ENCODE measurements at regions of chr12 and their contacts with region 1.

Region 1: GRCh38 chr12:56630160-56630632 is at the start of gene BAZ2A:
- DNase-seq: peak; percentile 80 to 86 (median 83)
- H3K4me3 ChIP-seq: peak within 1 kb of the TSS; percentile 90 to 98
- H3K4me3 Mint-ChIP-seq: peak within 1 kb of the TSS; percentile 86 to 99 (median 92)
- H3K27ac ChIP-seq: peak within 1 kb of the TSS; percentile 93
- H3K27ac Mint-ChIP-seq: peak within 1 kb of the TSS; percentile 82 to 98 (median 94)
- H3K4me1 ChIP-seq: peaks cover 76% of the 10 kb centered on the region
- H3K4me1 Mint-ChIP-seq: peaks cover 43 to 81% (median 63%) of the 10 kb centered on the region in 4 donors
- H3K27me3 ChIP-seq: no peaks in the 10 kb centered on the region
- H3K27me3 Mint-ChIP-seq: no peaks in the 10 kb centered on the region
- total RNA-seq, gene BAZ2A: 206 to 212 TPM

Region 2: DNA sequence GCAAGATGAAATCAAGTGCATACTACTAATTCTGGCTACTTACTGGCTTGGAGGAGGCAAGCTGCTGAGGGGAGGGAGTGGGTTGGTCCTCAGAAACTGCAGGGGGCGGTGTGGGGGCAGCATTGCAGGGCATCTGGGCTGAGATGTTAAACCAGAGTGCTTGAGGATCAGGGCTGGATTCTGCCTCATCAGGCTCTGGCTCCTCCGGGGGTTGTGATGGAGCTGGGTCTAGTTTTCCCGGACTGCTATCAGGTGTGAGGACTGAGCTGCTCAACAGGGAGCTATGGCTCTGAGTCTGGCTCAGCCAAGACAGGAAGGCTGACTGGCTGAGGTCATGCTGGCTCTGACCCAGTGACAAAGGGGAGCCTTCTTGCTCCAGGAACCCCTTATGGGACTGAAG is 28.7 kb before region 1 on chr12:
- CTCF ChIA-PET with region 1: interaction called, 38 read pairs
- POLR2A ChIA-PET with region 1: interaction called, 8 read pairs
- intact Hi-C with region 1: no loop called
- DNase-seq: peak in 2 of 5 donors; percentile 16 to 24
- H3K4me3 ChIP-seq: no peak overlapping the region
- H3K4me3 Mint-ChIP-seq: no peak overlapping the region
- H3K27ac ChIP-seq: no peak overlapping the region
- H3K27ac Mint-ChIP-seq: peak overlapping the region in 1 of 7 donors; percentile 62
- H3K4me1 ChIP-seq: no peaks in the 10 kb centered on the region
- H3K4me1 Mint-ChIP-seq: no peaks in the 10 kb centered on the region
- H3K27me3 ChIP-seq: no peaks in the 10 kb centered on the region
- H3K27me3 Mint-ChIP-seq: no peaks in the 10 kb centered on the region

Region 3: DNA sequence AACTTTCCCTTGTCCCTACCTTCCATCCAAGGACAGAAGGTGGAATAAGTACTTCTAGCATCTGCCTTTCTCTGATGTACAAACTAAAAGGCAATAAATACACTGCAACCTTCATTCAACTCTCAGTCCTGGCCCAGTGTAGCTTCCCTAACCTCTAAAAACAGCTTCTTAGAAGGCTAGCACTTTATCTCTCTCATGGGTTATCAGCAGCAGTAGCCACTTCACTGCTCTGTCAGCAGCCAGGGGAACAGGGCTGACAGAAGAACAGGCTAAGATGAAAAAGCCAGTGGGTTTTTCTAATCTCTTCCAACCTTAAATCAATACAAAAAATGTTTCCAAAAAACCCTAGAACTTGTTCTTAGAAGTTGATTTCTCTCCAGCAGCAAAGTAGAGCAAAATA is 13.3 kb before region 1 on chr12:
- CTCF ChIA-PET with region 1: interaction called, 68 read pairs
- POLR2A ChIA-PET with region 1: interaction called, 67 read pairs
- intact Hi-C with region 1: no loop called
- DNase-seq: no peak
- H3K4me3 ChIP-seq: no peak overlapping the region
- H3K4me3 Mint-ChIP-seq: no peak overlapping the region
- H3K27ac ChIP-seq: no peak overlapping the region
- H3K27ac Mint-ChIP-seq: peak overlapping the region in 3 of 7 donors; percentile 23 to 66 (median 48)
- H3K4me1 ChIP-seq: peaks cover 21% of the 10 kb centered on the region
- H3K4me1 Mint-ChIP-seq: peaks cover 15 to 40% (median 24%) of the 10 kb centered on the region in 4 donors
- H3K27me3 ChIP-seq: no peaks in the 10 kb centered on the region
- H3K27me3 Mint-ChIP-seq: no peaks in the 10 kb centered on the region

Region 4: DNA sequence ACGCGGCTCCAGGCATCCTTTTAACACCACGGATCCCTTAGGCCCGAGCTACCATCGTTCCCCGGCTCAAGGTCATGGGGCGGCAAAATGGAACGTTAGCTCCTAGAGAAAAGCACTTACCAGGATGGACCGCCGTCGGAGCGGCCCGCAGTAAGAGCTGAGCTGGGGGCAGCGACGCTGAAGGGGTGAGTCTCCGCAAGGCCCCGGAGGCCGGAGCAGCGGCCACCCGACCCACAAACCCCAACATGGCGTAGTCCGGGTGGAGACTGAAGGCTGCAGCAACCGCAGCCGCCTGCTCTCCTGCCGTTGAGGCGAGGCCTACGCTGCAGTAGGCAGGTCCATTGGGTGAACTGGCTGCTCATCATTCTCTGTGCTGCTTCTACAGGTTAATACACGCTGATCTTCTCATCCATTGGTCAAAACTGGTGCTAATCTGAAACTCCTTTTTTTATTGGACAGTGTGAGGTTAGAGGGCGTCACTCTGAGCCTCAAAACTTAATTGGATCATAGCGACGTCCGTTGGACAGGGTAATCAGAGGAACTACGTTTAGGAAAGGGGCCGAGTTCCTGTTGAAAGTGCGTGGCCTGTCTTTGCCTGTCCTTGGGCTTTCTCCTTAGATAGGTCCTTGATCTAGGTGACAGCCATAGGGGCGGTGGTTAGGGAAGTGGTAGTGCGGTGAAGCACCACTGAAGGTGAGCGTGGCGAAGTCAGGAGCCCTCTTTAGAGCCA is 15.7 kb after region 1 on chr12 and contains the start of gene ATP5F1B:
- CTCF ChIA-PET with region 1: interaction called, 38 read pairs
- POLR2A ChIA-PET with region 1: interaction called, 117 read pairs
- intact Hi-C with region 1: loop called (anchors 1 kb)
- DNase-seq: peak; percentile 91 to 97 (median 96)
- H3K4me3 ChIP-seq: peak within 1 kb of the TSS; percentile 95 to 99
- H3K4me3 Mint-ChIP-seq: peak within 1 kb of the TSS; percentile 68 to 99 (median 97)
- H3K27ac ChIP-seq: peak within 1 kb of the TSS; percentile 91
- H3K27ac Mint-ChIP-seq: peak within 1 kb of the TSS; percentile 78 to 99 (median 98)
- H3K4me1 ChIP-seq: peaks cover 33% of the 10 kb centered on the region
- H3K4me1 Mint-ChIP-seq: peaks cover 18 to 43% (median 30%) of the 10 kb centered on the region in 4 donors
- H3K27me3 ChIP-seq: no peaks in the 10 kb centered on the region
- H3K27me3 Mint-ChIP-seq: no peaks in the 10 kb centered on the region
- total RNA-seq, gene ATP5F1B: 243 to 256 TPM

Region 5: DNA sequence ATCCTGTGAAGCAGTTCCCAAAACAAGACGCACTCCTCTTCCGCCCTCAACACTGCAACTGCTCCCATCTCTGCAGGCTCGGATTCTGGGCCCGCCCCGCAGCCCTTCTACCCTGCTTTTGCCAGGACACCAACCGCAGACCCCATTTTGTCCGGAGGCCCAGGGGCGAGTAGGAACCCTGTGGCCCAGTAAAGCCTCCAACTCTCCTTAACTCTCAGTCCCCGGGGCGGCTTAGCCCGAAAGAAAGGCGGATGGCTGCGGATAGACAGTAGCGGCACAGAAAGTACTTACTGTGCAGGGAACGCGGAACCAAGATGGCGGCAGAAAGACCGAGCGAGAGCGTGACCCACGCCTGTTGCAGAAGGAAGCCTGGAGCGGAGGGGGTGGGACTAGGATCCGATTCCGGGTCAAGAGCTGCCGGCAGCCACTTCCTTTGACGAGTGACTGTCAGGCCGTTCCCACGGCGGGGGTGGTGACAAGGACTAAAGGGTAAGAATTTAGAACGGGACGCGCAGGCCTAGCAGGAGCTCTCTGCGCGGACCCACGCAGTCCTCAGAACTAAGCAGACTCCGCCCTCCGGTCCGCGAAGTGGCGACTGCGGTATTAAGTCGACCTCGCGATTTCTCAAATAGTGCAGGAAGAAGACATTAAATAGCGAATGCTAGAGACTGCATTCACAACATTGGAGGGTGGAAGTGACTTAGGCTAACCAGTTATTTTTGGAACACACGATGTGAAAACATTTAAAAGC is 95.0 kb after region 1 on chr12 and contains the start of gene NACA:
- CTCF ChIA-PET with region 1: interaction called, 6 read pairs
- POLR2A ChIA-PET with region 1: interaction called, 35 read pairs
- intact Hi-C with region 1: no loop called
- DNase-seq: peak; percentile 94 to 100 (median 98)
- H3K4me3 ChIP-seq: peak within 1 kb of the TSS; percentile 90 to 100
- H3K4me3 Mint-ChIP-seq: peak within 1 kb of the TSS; percentile 90 to 99 (median 98)
- H3K27ac ChIP-seq: peak within 1 kb of the TSS; percentile 90
- H3K27ac Mint-ChIP-seq: peak within 1 kb of the TSS; percentile 92 to 99 (median 97)
- H3K4me1 ChIP-seq: peaks cover 54% of the 10 kb centered on the region
- H3K4me1 Mint-ChIP-seq: peaks cover 41 to 66% (median 51%) of the 10 kb centered on the region in 4 donors
- H3K27me3 ChIP-seq: no peaks in the 10 kb centered on the region
- H3K27me3 Mint-ChIP-seq: no peaks in the 10 kb centered on the region
- total RNA-seq, gene NACA: 1,184 to 1,255 TPM

Region 6: DNA sequence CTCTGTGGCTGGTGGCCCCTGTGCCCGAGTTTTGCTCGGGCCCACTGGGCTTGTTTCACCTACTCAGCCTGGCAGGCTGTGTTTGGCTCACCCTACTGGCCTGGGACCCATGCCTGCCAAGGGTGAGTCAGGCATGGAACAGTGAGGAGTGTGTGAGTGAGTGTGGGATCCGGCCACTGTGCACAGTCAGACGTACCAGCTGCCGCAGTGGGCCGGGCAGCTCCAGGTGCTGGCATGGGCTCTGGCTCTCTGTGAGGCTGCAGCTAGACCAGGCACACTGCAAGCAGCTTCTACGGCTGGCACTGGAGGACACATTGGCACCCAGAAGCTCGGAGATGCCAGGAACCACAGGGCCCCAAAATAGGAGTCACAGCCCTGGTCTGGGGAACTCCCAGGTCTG is 173.6 kb after region 1 on chr12:
- CTCF ChIA-PET with region 1: no interaction called
- POLR2A ChIA-PET with region 1: no interaction called
- intact Hi-C with region 1: no loop called
- DNase-seq: no peak
- H3K4me3 ChIP-seq: no peak overlapping the region
- H3K4me3 Mint-ChIP-seq: no peak overlapping the region
- H3K27ac ChIP-seq: no peak overlapping the region
- H3K27ac Mint-ChIP-seq: no peak overlapping the region
- H3K4me1 ChIP-seq: no peaks in the 10 kb centered on the region
- H3K4me1 Mint-ChIP-seq: no peaks in the 10 kb centered on the region
- H3K27me3 ChIP-seq: no peaks in the 10 kb centered on the region
- H3K27me3 Mint-ChIP-seq: peaks cover 0 to 2% of the 10 kb centered on the region in 2 donors